ENCODE measurements at regions of chr2 and their contacts with region 1.

Region 1: DNA sequence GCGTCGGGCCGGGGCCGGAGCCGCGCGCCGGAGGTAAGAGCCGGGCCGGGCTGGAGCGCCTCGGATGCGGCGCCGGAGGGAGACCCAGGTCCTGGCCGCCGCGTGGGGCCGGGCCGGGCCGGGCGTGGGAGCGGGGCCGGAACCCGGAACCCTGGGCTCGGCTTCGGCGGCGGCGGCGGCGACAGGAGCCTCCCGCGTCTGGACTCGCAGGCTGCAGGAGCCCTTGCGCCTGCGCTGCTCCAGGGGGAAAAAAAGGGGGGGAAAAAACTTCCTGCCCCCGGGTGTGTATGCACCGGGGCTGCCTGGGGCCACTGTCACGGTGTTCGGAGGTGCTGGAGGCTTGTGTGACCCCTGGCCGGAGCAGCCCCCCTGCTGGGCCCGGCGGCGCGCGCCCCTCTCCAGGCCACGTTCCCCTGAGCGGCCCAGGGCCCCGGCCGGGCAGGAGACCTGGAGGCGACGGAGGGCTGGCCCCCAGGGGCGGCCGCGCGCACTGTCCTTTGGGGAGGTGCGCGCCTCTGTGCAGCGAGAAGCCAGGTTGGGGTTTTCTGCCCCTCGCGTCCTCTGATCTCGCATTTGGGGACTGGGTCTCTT is 864 bp downstream of the KLHL29 start:
- DNase-seq: peak; percentile 32
- ATAC-seq: no peak
- H3K4me3 Mint-ChIP-seq: peak overlapping the region; percentile 86
- H3K27ac Mint-ChIP-seq: peak overlapping the region; percentile 26
- H3K4me1 Mint-ChIP-seq: peaks cover 26% of the 10 kb centered on the region
- H3K27me3 Mint-ChIP-seq: peaks cover 33% of the 10 kb centered on the region
- CTCF ChIP-seq: no peak

Region 2: DNA sequence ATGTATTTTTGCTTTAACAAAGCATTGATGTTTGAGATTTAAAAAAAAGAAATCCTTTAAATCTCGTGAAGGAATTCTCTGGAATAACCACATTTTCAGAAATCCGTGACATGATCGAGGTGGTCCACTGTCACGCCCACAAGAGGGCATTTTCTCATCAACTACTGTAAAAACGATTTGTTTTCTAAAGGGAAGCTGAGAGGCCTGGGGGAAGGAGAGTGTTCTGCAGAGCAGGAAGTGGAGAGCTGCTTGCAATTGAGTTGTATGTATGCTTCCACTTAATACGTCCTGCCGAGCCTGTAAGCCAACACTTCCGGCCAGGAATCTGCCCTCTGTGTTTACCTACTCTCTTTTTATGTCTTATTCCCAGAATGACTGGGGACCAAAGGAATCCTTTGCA is 18.6 kb after region 1 on chr2:
- CTCF ChIA-PET with region 1: no interaction called
- POLR2A ChIA-PET with region 1: interaction called, 4 read pairs
- intact Hi-C with region 1: loop called (anchors 2 kb)
- DNase-seq: no peak
- ATAC-seq: peak; percentile 64
- H3K4me3 Mint-ChIP-seq: peak overlapping the region; percentile 71
- H3K27ac Mint-ChIP-seq: peak overlapping the region; percentile 78
- H3K4me1 Mint-ChIP-seq: peaks cover 16% of the 10 kb centered on the region
- H3K27me3 Mint-ChIP-seq: no peaks in the 10 kb centered on the region
- CTCF ChIP-seq: no peak